Right lobe of liver (tissue), 6 donors: ENCODE measurements at regions of chr1 and their contacts with region 1.

Region 1: DNA sequence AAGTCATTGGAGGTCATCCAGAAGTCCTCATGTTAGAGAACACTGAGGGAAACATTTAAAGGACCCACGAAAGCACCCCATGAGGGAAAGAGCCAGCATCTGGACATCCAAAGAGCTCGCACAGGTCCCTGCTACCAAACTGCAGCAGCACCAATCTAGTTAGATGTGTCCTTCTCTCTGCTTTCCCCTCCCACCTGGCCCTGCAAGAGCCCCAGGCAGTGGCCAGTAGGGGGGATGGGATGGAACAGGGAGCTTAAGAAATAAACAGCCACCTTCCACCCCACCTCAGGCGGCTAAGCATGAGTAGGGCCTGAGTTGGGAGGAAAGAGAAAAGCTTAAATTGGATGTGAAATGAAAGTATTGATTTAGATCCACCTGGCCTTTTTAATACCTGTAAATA is 175.9 kb upstream of the KCND3 start:
- DNase-seq: no peak
- ATAC-seq: no peak
- H3K4me3 ChIP-seq: no peak overlapping the region
- H3K27ac ChIP-seq: no peak overlapping the region
- H3K4me1 ChIP-seq: no peaks in the 10 kb centered on the region
- H3K27me3 ChIP-seq: no peaks in the 10 kb centered on the region
- CTCF ChIP-seq: no peak
- POLR2A ChIP-seq: no peak

Region 2: GRCh38 chr1:112144733-112145426 is 20.5 kb before region 1 on chr1:
- intact Hi-C with region 1: loop called in 1 of 2 experiments (anchors 2 kb)
- DNase-seq: no peak
- ATAC-seq: peak in 1 of 4 donors; percentile 21
- H3K4me3 ChIP-seq: no peak overlapping the region
- H3K27ac ChIP-seq: no peak overlapping the region
- H3K4me1 ChIP-seq: peaks cover 0 to 14% (median 4%) of the 10 kb centered on the region in 4 donors
- H3K27me3 ChIP-seq: no peaks in the 10 kb centered on the region
- CTCF ChIP-seq: no peak
- POLR2A ChIP-seq: no peak

Region 3: DNA sequence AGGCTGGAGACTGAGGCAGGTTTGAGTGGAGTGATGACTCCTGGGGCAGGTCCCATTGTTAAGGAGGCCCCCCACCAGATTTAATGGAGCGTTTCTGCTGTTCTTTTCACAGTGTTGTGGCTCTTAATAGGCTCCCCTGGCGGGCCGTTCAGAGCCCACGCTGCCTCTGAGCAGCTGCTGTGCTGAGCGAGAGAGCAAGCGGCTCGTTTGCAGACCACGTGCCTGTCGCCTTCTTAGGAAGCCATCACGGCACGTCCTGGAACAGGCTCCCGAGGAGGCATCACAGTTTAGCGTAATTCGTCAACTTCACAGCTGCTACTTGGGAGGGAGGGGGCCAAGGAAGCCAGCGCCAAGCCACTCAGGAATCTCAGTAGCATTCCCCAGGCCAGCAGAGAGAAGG is 160.1 kb after region 1 on chr1:
- intact Hi-C with region 1: no loop called
- DNase-seq: no peak
- ATAC-seq: no peak
- H3K4me3 ChIP-seq: no peak overlapping the region
- H3K27ac ChIP-seq: no peak overlapping the region
- H3K4me1 ChIP-seq: no peaks in the 10 kb centered on the region
- H3K27me3 ChIP-seq: no peaks in the 10 kb centered on the region
- CTCF ChIP-seq: no peak
- POLR2A ChIP-seq: no peak